Activated CD4-positive, alpha-beta memory T cell treated with anti-CD3 and anti-CD28 coated beads for 36 hours (primary cell): ENCODE measurements at regions of chr12 and their contacts with region 1.

Region 1: DNA sequence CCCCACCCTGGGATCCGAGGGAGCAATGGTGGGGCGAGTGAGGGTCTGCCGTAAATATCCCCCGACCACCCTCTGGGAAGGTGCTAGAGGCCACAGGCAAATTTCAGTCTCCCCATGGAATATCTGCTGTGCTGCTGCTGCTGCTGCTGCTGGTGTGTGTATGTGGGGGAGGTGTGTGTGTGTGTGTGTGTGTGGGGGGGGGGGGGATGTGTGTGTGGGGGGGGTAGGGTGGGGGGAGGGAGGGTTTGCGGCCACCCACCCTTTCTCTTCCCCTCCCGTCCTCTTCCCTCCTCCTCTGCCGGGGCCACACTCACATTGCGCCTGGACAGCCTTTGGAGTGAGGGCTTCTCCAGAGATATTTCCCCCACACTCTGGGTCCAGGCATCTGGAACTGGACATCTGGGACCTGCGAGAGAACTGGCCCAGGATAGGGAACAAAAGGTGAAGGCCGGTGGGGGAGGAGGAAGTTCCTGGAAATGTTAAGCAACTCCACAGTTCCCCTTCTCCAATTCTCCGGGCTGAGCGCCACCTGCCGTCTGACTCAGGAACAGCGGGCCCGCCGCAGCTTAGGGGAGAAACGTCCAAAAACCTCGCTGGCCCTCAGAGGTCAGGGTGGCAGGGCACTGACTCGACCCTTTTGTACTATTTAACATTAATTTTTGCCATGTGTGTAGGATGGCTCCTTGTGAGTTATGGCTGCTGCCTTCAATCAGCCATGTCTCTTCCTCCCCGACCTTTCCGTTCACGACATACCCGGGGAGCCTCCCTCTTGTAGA is at the start of gene C1RL:
- DNase-seq: peak; percentile 89
- H3K4me3 Mint-ChIP-seq: peak within 1 kb of the TSS; percentile 95
- H3K27ac Mint-ChIP-seq: peak within 1 kb of the TSS; percentile 99
- H3K4me1 Mint-ChIP-seq: peaks cover 39% of the 10 kb centered on the region
- H3K27me3 Mint-ChIP-seq: no peaks in the 10 kb centered on the region
- total RNA-seq, gene C1RL: 17.1 to 22.6 TPM

Region 2: DNA sequence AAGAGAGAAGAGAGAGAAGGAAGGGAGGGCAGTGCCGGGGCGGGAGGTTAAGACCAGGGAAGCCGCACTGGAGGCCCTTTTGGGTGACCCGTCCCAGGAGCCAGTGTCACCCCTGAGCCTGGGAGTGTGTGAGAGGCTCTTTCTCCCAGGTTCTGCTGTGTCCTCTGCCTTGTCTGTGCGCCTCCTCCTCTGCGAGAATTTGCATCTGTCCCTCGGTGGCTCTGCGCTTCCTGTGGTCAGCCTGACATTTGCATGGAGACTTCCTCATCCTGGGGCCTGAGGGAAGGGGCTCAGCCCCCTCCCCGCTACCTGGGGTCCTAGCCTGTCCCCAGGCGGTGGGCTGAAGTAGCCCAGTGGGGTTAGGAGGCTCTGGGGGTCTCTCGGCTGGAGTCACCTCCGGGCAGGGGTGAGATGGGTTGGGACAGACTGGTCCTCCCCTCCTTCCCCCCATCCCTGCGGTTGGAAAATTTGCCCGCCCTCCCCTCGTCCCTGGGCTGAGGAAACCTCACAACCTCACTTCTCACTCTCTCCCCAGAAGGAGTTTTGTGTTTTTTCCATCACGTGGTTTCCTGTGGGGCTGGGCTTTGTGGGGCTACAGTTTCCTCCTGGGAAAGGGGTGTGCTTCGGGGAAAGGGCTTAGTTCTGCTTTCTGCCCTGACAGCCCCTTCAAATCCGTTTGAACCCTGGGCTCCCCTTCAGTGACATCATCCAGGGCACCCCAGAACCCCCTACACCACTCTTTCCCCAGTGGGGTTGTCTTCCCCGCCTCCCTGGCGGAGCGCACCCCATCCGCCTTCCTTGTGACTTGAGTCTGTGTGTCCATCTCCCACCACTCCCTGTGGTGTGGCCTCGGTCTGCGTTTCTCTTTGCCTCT is 155.3 kb before region 1 on chr12:
- CTCF ChIA-PET with region 1: interaction called, 13 read pairs
- POLR2A ChIA-PET with region 1: interaction called, 3 read pairs
- intact Hi-C with region 1: no loop called
- DNase-seq: peak; percentile 91
- H3K4me3 Mint-ChIP-seq: peak overlapping the region; percentile 98
- H3K27ac Mint-ChIP-seq: peak overlapping the region; percentile 97
- H3K4me1 Mint-ChIP-seq: peaks cover 71% of the 10 kb centered on the region
- H3K27me3 Mint-ChIP-seq: no peaks in the 10 kb centered on the region

Region 3: GRCh38 chr12:7018350-7019042 is 90.5 kb before region 1 on chr12 and contains the start of gene LPCAT3:
- CTCF ChIA-PET with region 1: interaction called, 16 read pairs
- POLR2A ChIA-PET with region 1: interaction called, 8 read pairs
- intact Hi-C with region 1: loop called (anchors 1 kb)
- DNase-seq: peak; percentile 98
- H3K4me3 Mint-ChIP-seq: peak within 1 kb of the TSS; percentile 88
- H3K27ac Mint-ChIP-seq: peak within 1 kb of the TSS; percentile 73
- H3K4me1 Mint-ChIP-seq: peaks cover 26% of the 10 kb centered on the region
- H3K27me3 Mint-ChIP-seq: no peaks in the 10 kb centered on the region
- total RNA-seq, gene LPCAT3: 18.3 to 20.5 TPM

Region 4: DNA sequence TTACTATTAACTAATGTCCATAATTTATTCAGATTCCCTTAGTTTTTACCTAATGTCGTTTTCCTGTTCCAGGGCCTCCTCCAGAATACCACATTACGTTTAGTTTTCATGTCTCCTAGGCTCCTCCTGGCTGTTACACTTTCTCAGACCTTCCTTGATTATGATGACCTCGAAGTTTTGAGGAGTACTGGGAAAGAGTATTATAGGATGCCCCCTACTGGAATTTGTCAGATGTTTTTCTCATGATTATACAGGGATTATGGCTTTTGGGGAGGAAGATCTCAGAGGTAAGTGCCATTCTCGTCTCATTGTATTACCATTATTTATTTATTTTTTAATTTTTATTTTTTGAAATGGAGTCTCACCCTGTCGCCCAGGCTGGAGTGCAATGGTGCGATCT is 66.1 kb before region 1 on chr12:
- CTCF ChIA-PET with region 1: no interaction called
- POLR2A ChIA-PET with region 1: no interaction called
- intact Hi-C with region 1: no loop called
- DNase-seq: no peak
- H3K4me3 Mint-ChIP-seq: no peak overlapping the region
- H3K27ac Mint-ChIP-seq: no peak overlapping the region
- H3K4me1 Mint-ChIP-seq: peaks cover 7% of the 10 kb centered on the region
- H3K27me3 Mint-ChIP-seq: no peaks in the 10 kb centered on the region

Region 5: DNA sequence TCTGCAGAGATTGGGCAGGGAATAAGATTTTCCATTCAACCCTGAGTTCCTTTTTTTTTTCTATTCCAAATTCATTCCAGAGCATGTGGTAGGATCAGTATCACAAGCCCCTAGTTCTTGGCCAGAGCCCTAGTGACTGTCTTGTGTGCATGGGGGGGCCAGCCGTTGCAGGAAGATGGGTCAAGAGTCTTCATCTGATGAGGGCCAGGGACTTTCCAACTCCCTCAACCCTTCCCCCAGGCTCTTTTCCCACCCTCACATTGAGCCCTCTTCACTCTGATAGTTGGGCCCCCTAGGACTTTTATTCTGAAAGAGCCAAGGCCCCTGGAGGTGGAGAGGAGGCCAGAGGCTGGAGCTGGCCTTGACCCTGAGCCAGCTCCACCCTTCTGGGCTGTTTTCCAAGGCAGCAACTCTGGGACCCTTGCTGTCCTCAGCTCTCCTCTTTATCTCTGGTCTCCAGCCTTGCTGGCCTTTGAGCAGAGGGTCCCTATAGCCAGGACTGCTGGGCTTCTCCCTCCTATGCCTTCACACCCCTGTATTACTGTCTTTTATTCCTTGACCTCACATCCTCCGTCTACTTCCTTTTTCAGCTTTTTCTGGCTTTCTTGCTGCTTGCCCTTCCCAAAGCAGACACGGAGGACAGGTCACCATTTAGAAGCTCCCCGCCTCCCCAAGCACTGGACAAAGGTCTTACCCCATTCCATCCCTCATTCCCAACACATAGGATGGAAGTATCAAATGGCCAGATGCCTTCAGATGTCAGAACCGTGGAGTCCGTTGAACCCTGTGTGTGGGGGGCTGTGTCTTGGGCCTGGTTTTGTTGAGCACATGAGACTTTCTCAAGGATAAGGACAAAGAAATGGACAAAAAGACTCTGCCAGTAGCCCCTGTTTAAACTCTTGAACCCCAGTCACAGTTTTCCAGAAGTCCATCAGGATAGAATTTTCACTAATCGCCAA is 14.1 kb after region 1 on chr12:
- CTCF ChIA-PET with region 1: interaction called, 11 read pairs
- POLR2A ChIA-PET with region 1: interaction called, 3 read pairs
- intact Hi-C with region 1: no loop called
- DNase-seq: no peak
- H3K4me3 Mint-ChIP-seq: no peak overlapping the region
- H3K27ac Mint-ChIP-seq: no peak overlapping the region
- H3K4me1 Mint-ChIP-seq: no peaks in the 10 kb centered on the region
- H3K27me3 Mint-ChIP-seq: no peaks in the 10 kb centered on the region